CD8-positive, alpha-beta T cell (primary cell): ENCODE measurements at regions of chr21 and their contacts with region 1.

Region 1: GRCh38 chr21:44601596-44602462 is 1.4 kb downstream of the KRTAP10-7 start:
- DNase-seq: no peak
- ATAC-seq: no peak
- H3K4me3 ChIP-seq: no peak overlapping the region
- H3K4me3 Mint-ChIP-seq: no peak overlapping the region
- H3K27ac ChIP-seq: no peak overlapping the region
- H3K27ac Mint-ChIP-seq: no peak overlapping the region
- H3K4me1 ChIP-seq: no peaks in the 10 kb centered on the region
- H3K4me1 Mint-ChIP-seq: no peaks in the 10 kb centered on the region
- H3K27me3 ChIP-seq: peaks cover 0 to 4% of the 10 kb centered on the region in 2 experiments
- H3K27me3 Mint-ChIP-seq: peaks cover 7% of the 10 kb centered on the region
- CTCF ChIP-seq: no peak

Region 2: GRCh38 chr21:44583089-44583799 is 18.6 kb before region 1 on chr21:
- CTCF ChIA-PET with region 1: no interaction called
- POLR2A ChIA-PET with region 1: no interaction called
- intact Hi-C with region 1: no loop called
- DNase-seq: no peak
- ATAC-seq: no peak
- H3K4me3 ChIP-seq: no peak overlapping the region
- H3K4me3 Mint-ChIP-seq: no peak overlapping the region
- H3K27ac ChIP-seq: no peak overlapping the region
- H3K27ac Mint-ChIP-seq: no peak overlapping the region
- H3K4me1 ChIP-seq: no peaks in the 10 kb centered on the region
- H3K4me1 Mint-ChIP-seq: peaks cover 28% of the 10 kb centered on the region
- H3K27me3 ChIP-seq: no peaks in the 10 kb centered on the region
- H3K27me3 Mint-ChIP-seq: peaks cover 19% of the 10 kb centered on the region
- CTCF ChIP-seq: no peak

Region 3: GRCh38 chr21:44637018-44637850 is 35.4 kb after region 1 on chr21 and contains the start of gene KRTAP10-10:
- CTCF ChIA-PET with region 1: no interaction called
- POLR2A ChIA-PET with region 1: no interaction called
- intact Hi-C with region 1: no loop called
- DNase-seq: peak in 1 of 9 experiments; percentile 27
- ATAC-seq: no peak
- H3K4me3 ChIP-seq: no peak within 1 kb of the TSS
- H3K4me3 Mint-ChIP-seq: no peak within 1 kb of the TSS
- H3K27ac ChIP-seq: no peak within 1 kb of the TSS
- H3K27ac Mint-ChIP-seq: no peak within 1 kb of the TSS
- H3K4me1 ChIP-seq: no peaks in the 10 kb centered on the region
- H3K4me1 Mint-ChIP-seq: peaks cover 4% of the 10 kb centered on the region
- H3K27me3 ChIP-seq: no peaks in the 10 kb centered on the region
- H3K27me3 Mint-ChIP-seq: peaks cover 2% of the 10 kb centered on the region
- CTCF ChIP-seq: no peak
- total RNA-seq, gene KRTAP10-10: not detected

Region 4: DNA sequence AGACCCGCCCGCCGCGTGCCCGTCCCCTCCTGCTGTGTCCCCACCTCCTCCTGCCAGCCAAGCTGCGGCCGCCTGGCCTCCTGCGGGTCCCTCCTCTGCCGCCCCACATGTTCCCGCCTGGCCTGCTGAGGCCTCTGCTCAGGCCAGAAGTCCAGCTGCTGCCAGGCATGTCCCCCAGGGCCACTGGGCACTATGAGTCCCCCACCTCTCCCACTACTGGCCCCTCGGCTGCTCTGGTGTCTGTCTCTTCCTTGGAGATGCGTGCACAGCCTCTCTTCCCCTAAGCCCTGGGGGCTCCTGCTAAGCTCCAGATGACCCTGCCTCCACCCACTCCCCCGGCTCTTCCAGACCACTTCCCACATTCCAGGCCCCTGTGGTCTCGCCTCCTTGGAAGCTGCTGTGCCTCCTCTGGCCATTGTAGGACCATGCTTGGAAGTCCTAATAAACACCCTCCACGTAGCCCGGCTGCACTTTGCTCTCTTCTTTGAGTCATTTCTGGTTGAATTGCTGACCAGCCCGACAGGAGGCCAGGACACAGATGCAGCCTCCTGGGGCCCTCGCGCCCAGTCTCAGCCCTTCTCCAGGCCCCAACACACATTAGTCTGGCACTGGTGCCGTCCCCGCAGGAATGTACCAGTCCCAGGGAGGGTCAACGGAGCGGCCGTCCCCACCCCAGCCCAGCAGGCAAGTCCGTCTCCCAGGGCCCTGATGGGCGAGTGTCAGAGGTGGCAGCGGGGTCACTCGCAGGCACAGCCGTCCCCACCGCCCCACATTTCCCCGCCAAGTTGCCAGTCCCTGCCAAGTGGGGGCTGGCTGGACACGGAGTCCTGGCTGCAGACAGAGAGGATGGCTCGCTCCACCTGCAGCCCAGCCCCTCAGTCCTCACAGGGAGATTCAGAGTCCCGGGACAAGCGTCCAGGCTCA is 96.2 kb after region 1 on chr21:
- CTCF ChIA-PET with region 1: no interaction called
- POLR2A ChIA-PET with region 1: no interaction called
- intact Hi-C with region 1: loop called in 1 of 2 experiments (anchors 10 kb)
- DNase-seq: peak in 2 of 9 experiments; percentile 3 to 42
- ATAC-seq: no peak
- H3K4me3 ChIP-seq: no peak overlapping the region
- H3K4me3 Mint-ChIP-seq: no peak overlapping the region
- H3K27ac ChIP-seq: no peak overlapping the region
- H3K27ac Mint-ChIP-seq: no peak overlapping the region
- H3K4me1 ChIP-seq: peaks cover 6% of the 10 kb centered on the region
- H3K4me1 Mint-ChIP-seq: peaks cover 22% of the 10 kb centered on the region
- H3K27me3 ChIP-seq: peaks cover 7 to 21% of the 10 kb centered on the region in 2 experiments
- H3K27me3 Mint-ChIP-seq: peaks cover 54% of the 10 kb centered on the region
- CTCF ChIP-seq: no peak

Region 5: GRCh38 chr21:44765231-44766013 is 163.6 kb after region 1 on chr21:
- CTCF ChIA-PET with region 1: no interaction called
- POLR2A ChIA-PET with region 1: no interaction called
- intact Hi-C with region 1: loop called in 1 of 2 experiments (anchors 5 kb)
- DNase-seq: peak; percentile 26 to 87 (median 60)
- ATAC-seq: peak; percentile 97
- H3K4me3 ChIP-seq: peak overlapping the region in 1 of 2 experiments; percentile 36
- H3K4me3 Mint-ChIP-seq: peak overlapping the region; percentile 68
- H3K27ac ChIP-seq: peak overlapping the region; percentile 58 to 79
- H3K27ac Mint-ChIP-seq: peak overlapping the region; percentile 98
- H3K4me1 ChIP-seq: peaks cover 30% of the 10 kb centered on the region
- H3K4me1 Mint-ChIP-seq: peaks cover 17% of the 10 kb centered on the region
- H3K27me3 ChIP-seq: no peaks in the 10 kb centered on the region
- H3K27me3 Mint-ChIP-seq: no peaks in the 10 kb centered on the region
- CTCF ChIP-seq: no peak